ENCODE measurements at regions of chr12 and their contacts with region 1.

Region 1: GRCh38 chr12:26937875-26938700 is at the starts of genes FGFR1OP2 and INTS13:
- DNase-seq: peak; percentile 98
- H3K4me3 ChIP-seq: peak within 1 kb of the TSS; percentile 49 to 94 (median 91)
- H3K27ac ChIP-seq: peak within 1 kb of the TSS; percentile 82
- H3K4me1 ChIP-seq: peaks cover 49% of the 10 kb centered on the region
- H3K27me3 ChIP-seq: no peaks in the 10 kb centered on the region
- CTCF ChIP-seq: no peak
- POLR2A ChIP-seq: peak; percentile 90
- total RNA-seq, gene FGFR1OP2: 47.3 and 49.3 TPM in 2 replicates
- total RNA-seq, gene INTS13: 25.5 and 35.9 TPM in 2 replicates

Region 2: GRCh38 chr12:27703710-27704452 is 765.8 kb after region 1 on chr12:
- CTCF ChIA-PET with region 1: no interaction called
- POLR2A ChIA-PET with region 1: no interaction called
- dilution Hi-C with region 1: no loop called
- intact Hi-C with region 1: loop called (anchors 5 kb)
- DNase-seq: peak; percentile 87
- H3K4me3 ChIP-seq: no peak overlapping the region
- H3K27ac ChIP-seq: no peak overlapping the region
- H3K4me1 ChIP-seq: no peaks in the 10 kb centered on the region
- H3K27me3 ChIP-seq: no peaks in the 10 kb centered on the region
- CTCF ChIP-seq: peak; percentile 78 to 79
- POLR2A ChIP-seq: no peak

Measured in endothelial cell of umbilical vein (primary cell).